Right cardiac atrium (tissue), 5 donors: ENCODE measurements at regions of chr10 and their contacts with region 1.

Region 1: GRCh38 chr10:93293999-93294398 is 188.1 kb downstream of the MYOF start:
- DNase-seq: no peak
- ATAC-seq: no peak
- H3K4me3 ChIP-seq: no peak overlapping the region
- H3K27ac ChIP-seq: no peak overlapping the region
- H3K4me1 ChIP-seq: no peaks in the 10 kb centered on the region
- H3K27me3 ChIP-seq: no peaks in the 10 kb centered on the region

Region 2: GRCh38 chr10:92972066-92972870 is 321.7 kb before region 1 on chr10:
- intact Hi-C with region 1: no loop called
- DNase-seq: peak in 1 of 3 donors; percentile 28
- ATAC-seq: peak; percentile 19 to 63
- H3K4me3 ChIP-seq: no peak overlapping the region
- H3K27ac ChIP-seq: no peak overlapping the region
- H3K4me1 ChIP-seq: no peaks in the 10 kb centered on the region
- H3K27me3 ChIP-seq: no peaks in the 10 kb centered on the region

Region 3: DNA sequence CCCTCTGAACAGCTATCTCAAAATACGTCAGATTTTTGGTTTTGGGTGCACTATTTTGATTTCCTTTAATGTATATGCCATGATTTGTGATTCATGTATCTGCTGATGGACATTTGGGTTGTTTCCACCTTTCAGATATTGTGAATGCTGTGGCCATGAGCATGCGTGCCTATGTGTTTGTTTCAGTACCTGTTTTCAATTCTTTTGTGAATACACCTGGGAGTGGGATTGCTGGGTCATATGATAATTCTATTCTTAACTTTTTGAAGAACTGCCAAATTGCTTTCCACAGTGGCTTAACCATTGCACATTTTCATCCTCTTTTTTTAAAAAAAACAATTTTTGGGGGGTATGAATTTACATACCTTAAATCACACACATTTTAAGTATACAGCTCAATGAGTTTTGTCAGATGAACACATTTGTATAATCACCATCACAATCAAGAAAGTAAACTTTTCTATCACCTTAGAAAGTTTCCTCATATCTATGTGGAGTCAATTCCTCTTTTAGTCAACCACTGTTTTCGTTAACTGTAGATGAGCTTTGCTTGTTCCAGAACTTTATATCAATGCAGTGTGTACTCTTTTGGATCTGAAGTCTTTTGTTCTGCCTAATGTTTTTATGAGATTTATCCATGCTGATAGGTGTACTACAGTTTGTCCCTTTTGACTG is 183.4 kb before region 1 on chr10:
- intact Hi-C with region 1: loop called in 2 of 4 experiments (anchors 5 to 10 kb)
- DNase-seq: no peak
- ATAC-seq: no peak
- H3K4me3 ChIP-seq: no peak overlapping the region
- H3K27ac ChIP-seq: no peak overlapping the region
- H3K4me1 ChIP-seq: no peaks in the 10 kb centered on the region
- H3K27me3 ChIP-seq: no peaks in the 10 kb centered on the region

Region 4: DNA sequence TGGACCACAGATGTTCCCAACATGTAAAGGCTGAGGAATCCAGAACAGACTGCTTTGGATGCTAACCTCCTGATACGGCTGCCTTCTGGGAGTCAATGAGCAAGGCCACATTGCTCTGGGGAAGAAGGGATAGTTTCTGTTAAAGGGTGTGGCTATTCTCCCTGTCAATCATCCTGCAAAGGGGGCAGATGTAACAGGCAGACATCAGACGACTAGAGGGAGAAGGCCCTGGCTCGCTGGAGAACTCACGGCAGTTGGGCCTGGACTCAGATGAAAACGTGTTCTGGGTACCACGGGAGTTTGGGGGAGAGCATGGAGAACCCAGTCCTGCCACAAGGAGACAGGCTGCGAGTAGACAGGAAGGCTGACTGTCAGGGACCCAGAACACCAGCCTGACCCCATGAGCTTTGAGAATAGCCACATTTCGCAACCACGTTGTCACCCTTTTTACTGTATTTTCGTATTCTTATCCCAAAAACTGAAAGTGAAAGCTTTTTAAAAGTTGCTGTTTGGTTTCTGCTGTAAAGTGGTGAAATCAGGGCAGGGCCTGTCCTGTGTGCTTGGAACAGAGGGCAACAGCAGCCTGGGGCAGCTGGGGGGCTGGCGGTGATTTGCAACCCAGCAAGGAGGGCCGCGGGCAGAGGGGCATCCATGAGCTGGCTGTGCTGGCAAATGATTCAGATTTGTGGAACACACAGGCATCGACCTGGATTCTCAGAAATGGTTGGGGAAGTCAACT is 92.8 kb after region 1 on chr10:
- intact Hi-C with region 1: no loop called
- DNase-seq: peak in 2 of 3 donors; percentile 45 to 64
- ATAC-seq: peak; percentile 42 to 53
- H3K4me3 ChIP-seq: no peak overlapping the region
- H3K27ac ChIP-seq: no peak overlapping the region
- H3K4me1 ChIP-seq: peaks cover 4% of the 10 kb centered on the region
- H3K27me3 ChIP-seq: no peaks in the 10 kb centered on the region